Activated T-helper 1 cell treated with anti-CD3 and anti-CD28 coated beads, Interleukin-12 subunit alpha, Interleukin-12 subunit beta, Interleukin-2, Interleukin-4 antibody, amounts not matched to agents 30 ng/mL and 10 ng/mL and 1 ng/mL, durations not matched to agents 14 hours and 24 hours and 36 hours (primary cell): ENCODE measurements at regions of chr12 and their contacts with region 1.

Region 1: DNA sequence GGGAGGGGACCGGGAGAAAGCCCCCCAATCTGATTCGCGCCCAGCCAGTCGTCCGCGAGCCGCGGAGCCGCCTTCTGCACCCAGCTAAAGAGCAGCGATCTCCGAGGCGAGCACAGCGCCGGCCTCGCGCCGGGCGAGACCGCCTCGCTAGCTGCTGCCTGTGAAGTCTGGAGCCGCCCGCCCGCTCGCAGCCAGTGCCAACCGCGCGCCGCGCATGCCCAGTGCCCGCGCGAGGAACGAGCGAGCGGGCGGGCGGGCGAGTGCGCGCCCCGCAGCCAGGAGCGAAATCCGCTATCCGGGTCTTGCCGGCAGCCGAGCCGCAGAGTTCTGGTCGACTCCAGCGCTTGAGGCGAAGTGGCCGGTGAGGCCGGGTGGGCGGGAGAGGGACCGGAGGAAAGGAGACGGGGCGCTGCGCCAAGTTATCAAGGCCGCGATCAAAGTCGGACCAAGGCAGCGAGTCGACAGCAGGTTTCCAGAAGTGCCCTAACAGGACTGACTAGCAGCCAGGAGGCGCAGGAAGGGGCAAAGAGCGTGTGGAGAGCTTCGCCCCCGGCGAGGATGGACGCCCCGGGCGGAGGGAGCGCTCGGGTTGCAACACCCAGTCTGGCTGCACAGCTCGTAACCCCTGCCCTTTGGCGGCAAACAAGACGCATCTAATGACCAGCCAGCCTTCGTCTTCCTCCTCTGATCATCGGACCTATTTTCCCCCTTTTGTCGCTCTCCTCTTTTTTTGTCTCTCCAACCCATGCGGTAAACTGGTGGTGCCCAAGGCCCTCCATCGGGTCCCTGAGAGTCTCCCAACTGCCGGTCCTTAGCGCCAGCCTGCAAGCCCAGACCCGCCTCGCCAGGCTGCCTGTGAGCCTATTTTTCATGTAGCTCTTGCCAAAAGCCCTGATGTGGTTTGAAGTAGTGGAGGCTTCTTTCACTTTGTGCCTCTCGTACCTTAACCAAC is at the start of gene EPS8:
- DNase-seq: peak; percentile 83
- H3K4me3 Mint-ChIP-seq: peak within 1 kb of the TSS; percentile 91
- H3K27ac Mint-ChIP-seq: peak within 1 kb of the TSS; percentile 81
- H3K4me1 Mint-ChIP-seq: peaks cover 19% of the 10 kb centered on the region
- H3K27me3 Mint-ChIP-seq: peaks cover 73% of the 10 kb centered on the region
- total RNA-seq, gene EPS8: 1.9 and 3.1 TPM in 2 replicates

Region 2: GRCh38 chr12:15364221-15365160 is 425.0 kb before region 1 on chr12:
- intact Hi-C with region 1: no loop called
- DNase-seq: no peak
- H3K4me3 Mint-ChIP-seq: no peak overlapping the region
- H3K27ac Mint-ChIP-seq: no peak overlapping the region
- H3K4me1 Mint-ChIP-seq: no peaks in the 10 kb centered on the region
- H3K27me3 Mint-ChIP-seq: no peaks in the 10 kb centered on the region

Region 3: GRCh38 chr12:15590180-15590826 is 199.2 kb before region 1 on chr12:
- intact Hi-C with region 1: loop called (anchors 2 kb)
- DNase-seq: peak; percentile 42
- H3K4me3 Mint-ChIP-seq: peak overlapping the region; percentile 72
- H3K27ac Mint-ChIP-seq: no peak overlapping the region
- H3K4me1 Mint-ChIP-seq: peaks cover 9% of the 10 kb centered on the region
- H3K27me3 Mint-ChIP-seq: no peaks in the 10 kb centered on the region

Region 4: GRCh38 chr12:15700595-15700994 is 88.9 kb before region 1 on chr12:
- intact Hi-C with region 1: loop called (anchors 2 kb)
- DNase-seq: peak; percentile 14
- H3K4me3 Mint-ChIP-seq: peak overlapping the region; percentile 75
- H3K27ac Mint-ChIP-seq: peak overlapping the region; percentile 88
- H3K4me1 Mint-ChIP-seq: peaks cover 40% of the 10 kb centered on the region
- H3K27me3 Mint-ChIP-seq: no peaks in the 10 kb centered on the region